Prostate gland (tissue), 2 donors: ENCODE measurements at regions of chr22 and their contacts with region 1.

Region 1: GRCh38 chr22:31148953-31149627 is 8.8 kb upstream of the PLA2G3 start:
- DNase-seq: peak; percentile 78
- H3K4me3 ChIP-seq: no peak overlapping the region
- H3K27ac ChIP-seq: peak overlapping the region; percentile 43 to 54
- H3K4me1 ChIP-seq: no peaks in the 10 kb centered on the region
- H3K27me3 ChIP-seq: no peaks in the 10 kb centered on the region
- CTCF ChIP-seq: peak; percentile 68 to 96 (median 87)
- POLR2A ChIP-seq: no peak

Region 2: GRCh38 chr22:30763815-30764686 is 385.0 kb before region 1 on chr22:
- intact Hi-C with region 1: loop called (anchors 10 kb)
- DNase-seq: peak; percentile 68
- H3K4me3 ChIP-seq: no peak overlapping the region
- H3K27ac ChIP-seq: no peak overlapping the region
- H3K4me1 ChIP-seq: no peaks in the 10 kb centered on the region
- H3K27me3 ChIP-seq: no peaks in the 10 kb centered on the region
- CTCF ChIP-seq: peak in 3 of 4 experiments; percentile 63 to 83 (median 71)
- POLR2A ChIP-seq: no peak

Region 3: GRCh38 chr22:30910358-30910757 is 238.7 kb before region 1 on chr22:
- intact Hi-C with region 1: no loop called
- DNase-seq: no peak
- H3K4me3 ChIP-seq: no peak overlapping the region
- H3K27ac ChIP-seq: no peak overlapping the region
- H3K4me1 ChIP-seq: no peaks in the 10 kb centered on the region
- H3K27me3 ChIP-seq: no peaks in the 10 kb centered on the region
- CTCF ChIP-seq: no peak
- POLR2A ChIP-seq: no peak

Region 4: GRCh38 chr22:31089160-31090100 is 59.7 kb before region 1 on chr22:
- intact Hi-C with region 1: loop called (anchors 2 kb)
- DNase-seq: no peak
- H3K4me3 ChIP-seq: no peak overlapping the region
- H3K27ac ChIP-seq: peak overlapping the region; percentile 77 to 90
- H3K4me1 ChIP-seq: no peaks in the 10 kb centered on the region
- H3K27me3 ChIP-seq: no peaks in the 10 kb centered on the region
- CTCF ChIP-seq: peak; percentile 53 to 81 (median 65)
- POLR2A ChIP-seq: no peak

Region 5: GRCh38 chr22:31107178-31107893 is 41.8 kb before region 1 on chr22 and contains the start of gene SELENOM:
- intact Hi-C with region 1: loop called (anchors 5 kb)
- DNase-seq: peak; percentile 98
- H3K4me3 ChIP-seq: peak within 1 kb of the TSS; percentile 64 to 91
- H3K27ac ChIP-seq: peak within 1 kb of the TSS; percentile 90 to 97
- H3K4me1 ChIP-seq: peaks cover 4% of the 10 kb centered on the region
- H3K27me3 ChIP-seq: no peaks in the 10 kb centered on the region
- CTCF ChIP-seq: peak; percentile 66 to 99 (median 96)
- POLR2A ChIP-seq: peak; percentile 64
- total RNA-seq, gene SELENOM: 382 to 434 TPM

Region 6: GRCh38 chr22:31574055-31574670 is 425.1 kb after region 1 on chr22:
- intact Hi-C with region 1: no loop called
- DNase-seq: no peak
- H3K4me3 ChIP-seq: no peak overlapping the region
- H3K27ac ChIP-seq: no peak overlapping the region
- H3K4me1 ChIP-seq: no peaks in the 10 kb centered on the region
- H3K27me3 ChIP-seq: no peaks in the 10 kb centered on the region
- CTCF ChIP-seq: no peak
- POLR2A ChIP-seq: no peak